ENCODE measurements at regions of chr7 and their contacts with region 1.

Region 1: GRCh38 chr7:87910138-87910537 is 23.9 kb upstream of the ADAM22 start:
- DNase-seq: no peak
- ATAC-seq: peak; percentile 39; the same call in 2 of the 3 replicates
- H3K4me3 ChIP-seq: no peak overlapping the region
- H3K27ac ChIP-seq: no peak overlapping the region
- H3K4me1 ChIP-seq: no peaks in the 10 kb centered on the region
- H3K27me3 ChIP-seq: no peaks in the 10 kb centered on the region
- CTCF ChIP-seq: no peak
- EP300 ChIP-seq: no peak
- POLR2A ChIP-seq: 0 out of 2 replicates have a peak, but pooled peaks have one; percentile 9
- RAD21 ChIP-seq: no peak

Region 2: DNA sequence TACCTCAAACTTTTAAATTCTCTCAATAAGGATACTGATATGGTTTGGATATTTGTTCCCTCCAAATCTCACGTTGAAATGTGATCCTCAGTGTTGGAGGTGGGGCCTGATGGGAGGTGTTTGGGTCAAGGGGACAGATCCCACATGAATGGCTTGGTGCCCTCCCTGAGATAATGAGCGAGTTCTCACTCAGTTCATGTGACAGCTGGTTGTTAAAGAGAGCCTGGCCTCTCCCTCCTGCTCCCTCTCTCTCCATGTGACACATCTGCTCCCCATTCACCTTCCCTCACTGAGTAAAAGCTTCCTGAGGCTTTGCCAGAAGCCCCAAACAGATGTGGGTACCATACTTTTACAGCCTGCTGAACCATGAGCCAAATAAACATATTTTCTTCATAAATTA is 453.9 kb before region 1 on chr7:
- CTCF ChIA-PET with region 1: no interaction called
- POLR2A ChIA-PET with region 1: no interaction called
- RAD21 ChIA-PET with region 1: no interaction called
- SMC1A ChIA-PET with region 1: no interaction called
- in situ Hi-C with region 1: no loop called
- intact Hi-C with region 1: no loop called
- DNase-seq: no peak
- ATAC-seq: no peak
- H3K4me3 ChIP-seq: no peak overlapping the region
- H3K27ac ChIP-seq: no peak overlapping the region
- H3K4me1 ChIP-seq: no peaks in the 10 kb centered on the region
- H3K27me3 ChIP-seq: no peaks in the 10 kb centered on the region
- CTCF ChIP-seq: no peak
- EP300 ChIP-seq: no peak
- POLR2A ChIP-seq: no peak
- RAD21 ChIP-seq: no peak

Region 3: GRCh38 chr7:87920578-87920977 is 10.4 kb after region 1 on chr7:
- CTCF ChIA-PET with region 1: interaction called, 6 read pairs
- POLR2A ChIA-PET with region 1: interaction called, 11 read pairs
- RAD21 ChIA-PET with region 1: interaction called, 4 read pairs
- SMC1A ChIA-PET with region 1: interaction called, 9 read pairs
- in situ Hi-C with region 1: no loop called
- intact Hi-C with region 1: no loop called
- DNase-seq: no peak
- ATAC-seq: peak; percentile 8; the same call in 2 of the 3 replicates
- H3K4me3 ChIP-seq: no peak overlapping the region
- H3K27ac ChIP-seq: no peak overlapping the region
- H3K4me1 ChIP-seq: no peaks in the 10 kb centered on the region; the same call in 1 of the 2 replicates
- H3K27me3 ChIP-seq: no peaks in the 10 kb centered on the region
- CTCF ChIP-seq: no peak
- EP300 ChIP-seq: no peak
- POLR2A ChIP-seq: no peak
- RAD21 ChIP-seq: no peak

Measured in GM12878 (cell line).